SK-N-SH (cell line): ENCODE measurements at regions of chr11 and their contacts with region 1.

Region 1: GRCh38 chr11:7278314-7278917 is 26.7 kb downstream of the SYT9 start:
- DNase-seq: peak; percentile 37
- H3K4me3 ChIP-seq: no peak overlapping the region
- H3K27ac ChIP-seq: no peak overlapping the region
- H3K4me1 ChIP-seq: no peaks in the 10 kb centered on the region
- H3K27me3 ChIP-seq: no peaks in the 10 kb centered on the region
- CTCF ChIP-seq: peak; percentile 69
- EP300 ChIP-seq: no peak
- RAD21 ChIP-seq: peak; percentile 75

Region 2: DNA sequence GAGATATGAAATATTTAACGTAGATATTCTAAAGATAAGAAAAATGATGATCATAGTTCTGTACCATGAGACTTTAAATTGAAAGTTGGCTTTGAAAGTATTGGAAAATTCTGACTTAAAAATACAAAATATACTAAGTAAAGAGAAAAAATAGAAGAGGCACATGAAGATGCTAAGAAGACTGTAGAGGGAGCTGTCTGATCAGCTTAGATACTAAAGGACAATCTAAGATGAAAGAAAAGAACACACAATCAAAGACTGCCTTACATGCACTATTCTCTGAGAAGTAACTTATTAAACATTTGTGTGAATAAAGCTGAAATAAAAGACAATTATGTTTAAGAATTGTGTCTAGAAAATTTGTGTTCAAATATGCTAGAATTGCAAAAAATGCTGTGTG is 134.5 kb before region 1 on chr11:
- CTCF ChIA-PET with region 1: interaction called, 70 read pairs
- POLR2A ChIA-PET with region 1: no interaction called
- DNase-seq: no peak
- H3K4me3 ChIP-seq: no peak overlapping the region
- H3K27ac ChIP-seq: no peak overlapping the region
- H3K4me1 ChIP-seq: no peaks in the 10 kb centered on the region
- H3K27me3 ChIP-seq: no peaks in the 10 kb centered on the region
- CTCF ChIP-seq: peak; percentile 54
- EP300 ChIP-seq: no peak
- RAD21 ChIP-seq: peak; percentile 84

Region 3: GRCh38 chr11:7257724-7258123 is 20.7 kb before region 1 on chr11:
- CTCF ChIA-PET with region 1: interaction called, 17 read pairs
- POLR2A ChIA-PET with region 1: no interaction called
- DNase-seq: no peak
- H3K4me3 ChIP-seq: no peak overlapping the region
- H3K27ac ChIP-seq: no peak overlapping the region
- H3K4me1 ChIP-seq: peaks cover 0 to 12% of the 10 kb centered on the region in 2 experiments; a peak in 1 of 4 replicates
- H3K27me3 ChIP-seq: no peaks in the 10 kb centered on the region
- CTCF ChIP-seq: no peak
- EP300 ChIP-seq: no peak
- RAD21 ChIP-seq: no peak

Region 4: DNA sequence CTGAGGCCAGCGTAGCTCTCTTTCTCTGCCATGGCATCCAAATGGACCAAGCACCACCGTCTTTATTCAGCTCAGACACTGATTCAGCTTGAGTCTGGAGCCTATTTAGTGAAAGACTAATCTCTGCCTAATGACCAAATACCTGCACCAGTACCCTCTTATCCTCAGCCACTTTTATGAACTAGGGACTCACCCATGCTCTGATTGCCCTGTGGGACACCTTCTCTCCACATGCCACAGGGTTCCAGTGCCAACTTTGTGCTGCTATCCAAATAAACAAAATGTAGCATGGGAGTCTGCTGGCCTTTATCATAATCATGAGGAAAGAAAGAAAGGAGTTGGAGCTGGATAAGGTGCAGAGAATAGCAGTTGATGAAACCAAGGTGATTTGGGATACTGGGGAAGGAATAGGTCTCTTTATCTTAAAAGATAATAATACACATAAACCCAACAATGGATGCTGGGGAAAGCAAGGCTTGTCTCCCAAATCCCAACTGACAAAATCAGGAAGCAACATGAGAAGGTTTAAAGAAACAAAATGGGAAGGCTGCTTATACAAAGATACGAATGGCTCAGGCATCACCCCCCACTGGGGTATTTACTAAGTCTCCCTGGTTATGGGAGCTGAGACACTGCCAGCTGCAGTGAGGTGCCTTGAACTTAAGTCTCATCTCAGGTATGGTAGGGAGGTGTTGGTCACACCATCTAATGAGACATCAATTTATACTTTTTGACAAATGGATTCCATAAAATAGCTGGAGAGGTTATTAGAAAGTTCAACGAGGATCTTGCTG is 36.6 kb after region 1 on chr11:
- CTCF ChIA-PET with region 1: interaction called, 11 read pairs
- POLR2A ChIA-PET with region 1: no interaction called
- DNase-seq: no peak
- H3K4me3 ChIP-seq: no peak overlapping the region
- H3K27ac ChIP-seq: no peak overlapping the region
- H3K4me1 ChIP-seq: no peaks in the 10 kb centered on the region
- H3K27me3 ChIP-seq: no peaks in the 10 kb centered on the region
- CTCF ChIP-seq: no peak
- EP300 ChIP-seq: no peak
- RAD21 ChIP-seq: no peak

Region 5: DNA sequence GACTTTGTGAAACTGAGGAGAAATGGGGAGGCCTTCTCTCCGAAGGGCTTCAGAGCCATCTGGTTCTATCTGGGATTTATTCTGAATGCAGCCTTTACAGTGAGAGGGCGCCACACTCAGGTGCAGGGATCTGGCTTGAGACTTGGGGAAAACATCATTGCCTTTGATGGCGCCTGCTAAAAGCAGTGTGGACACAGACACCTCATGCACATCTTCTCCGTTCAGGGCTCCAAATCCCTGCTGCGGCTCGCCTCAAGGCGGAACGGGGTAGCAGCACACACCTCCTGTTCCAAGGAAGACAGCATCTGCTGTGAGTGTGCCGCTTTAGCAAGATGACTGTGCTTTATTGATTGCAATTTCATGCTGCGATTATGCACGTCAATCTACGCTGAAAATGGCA is 169.8 kb after region 1 on chr11:
- CTCF ChIA-PET with region 1: interaction called, 35 read pairs
- POLR2A ChIA-PET with region 1: no interaction called
- DNase-seq: no peak
- H3K4me3 ChIP-seq: no peak overlapping the region
- H3K27ac ChIP-seq: no peak overlapping the region
- H3K4me1 ChIP-seq: no peaks in the 10 kb centered on the region; a peak in 1 of 4 replicates
- H3K27me3 ChIP-seq: no peaks in the 10 kb centered on the region
- CTCF ChIP-seq: no peak
- EP300 ChIP-seq: no peak
- RAD21 ChIP-seq: 0 out of 2 replicates have a peak, but pooled peaks have one; percentile 28